ENCODE measurements at regions of chr3 and their contacts with region 1.

Region 1: DNA sequence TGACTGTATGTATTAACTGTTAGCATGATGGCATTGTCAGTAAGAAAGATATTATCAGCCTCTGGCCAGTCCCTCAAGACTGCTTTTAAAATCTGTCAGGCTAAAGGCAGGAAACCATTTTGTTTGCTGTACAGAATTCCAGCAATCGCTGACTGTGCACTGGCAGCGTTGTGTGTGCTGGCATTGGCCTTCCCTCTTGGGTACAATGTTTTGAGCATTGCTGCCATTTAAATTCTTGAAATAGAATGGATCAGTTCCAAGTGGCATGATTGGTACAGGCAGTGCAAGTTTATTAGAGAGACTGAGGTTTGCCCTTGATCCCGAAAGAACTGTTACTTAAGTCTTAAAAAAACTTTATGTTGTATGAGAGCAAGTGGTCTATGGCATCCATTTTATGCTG is 788.7 kb downstream of the OTOL1 start:
- DNase-seq: no peak
- H3K4me3 Mint-ChIP-seq: no peak overlapping the region
- H3K27ac Mint-ChIP-seq: no peak overlapping the region
- H3K4me1 Mint-ChIP-seq: peaks cover 13% of the 10 kb centered on the region
- H3K27me3 Mint-ChIP-seq: no peaks in the 10 kb centered on the region
- CTCF ChIP-seq: no peak

Region 2: DNA sequence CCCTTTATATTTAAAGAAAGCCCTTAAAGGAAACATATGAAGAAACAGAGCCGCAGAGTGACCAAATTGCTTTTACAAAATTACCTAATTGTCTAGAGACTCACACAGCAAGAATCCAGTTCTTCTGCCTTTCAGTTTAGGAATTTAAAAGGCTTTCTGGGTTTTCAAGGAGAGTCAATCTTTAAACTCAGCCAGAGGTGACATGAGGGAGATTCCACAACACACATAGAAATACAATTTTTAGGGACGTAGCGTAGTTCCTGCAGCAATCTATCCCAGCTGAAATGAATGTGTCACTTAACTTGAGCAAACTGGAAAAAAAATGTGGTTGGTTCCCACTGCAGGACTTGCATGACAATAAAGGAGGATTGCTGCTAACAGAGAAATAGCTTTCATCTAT is 519.0 kb before region 1 on chr3:
- CTCF ChIA-PET with region 1: no interaction called
- intact Hi-C with region 1: no loop called
- DNase-seq: no peak
- H3K4me3 Mint-ChIP-seq: no peak overlapping the region
- H3K27ac Mint-ChIP-seq: no peak overlapping the region
- H3K4me1 Mint-ChIP-seq: no peaks in the 10 kb centered on the region
- H3K27me3 Mint-ChIP-seq: no peaks in the 10 kb centered on the region
- CTCF ChIP-seq: no peak

Region 3: GRCh38 chr3:162348912-162349311 is 63.7 kb after region 1 on chr3:
- CTCF ChIA-PET with region 1: no interaction called
- intact Hi-C with region 1: no loop called
- DNase-seq: no peak
- H3K4me3 Mint-ChIP-seq: no peak overlapping the region
- H3K27ac Mint-ChIP-seq: no peak overlapping the region
- H3K4me1 Mint-ChIP-seq: no peaks in the 10 kb centered on the region
- H3K27me3 Mint-ChIP-seq: no peaks in the 10 kb centered on the region
- CTCF ChIP-seq: no peak

Region 4: GRCh38 chr3:163056874-163057497 is 771.7 kb after region 1 on chr3:
- CTCF ChIA-PET with region 1: no interaction called
- intact Hi-C with region 1: loop called (anchors 5 kb)
- DNase-seq: peak; percentile 80
- H3K4me3 Mint-ChIP-seq: no peak overlapping the region
- H3K27ac Mint-ChIP-seq: no peak overlapping the region
- H3K4me1 Mint-ChIP-seq: no peaks in the 10 kb centered on the region
- H3K27me3 Mint-ChIP-seq: no peaks in the 10 kb centered on the region
- CTCF ChIP-seq: peak; percentile 69

Measured in Calu3 (cell line).